MCF 10A (cell line): ENCODE measurements at regions of chr18 and their contacts with region 1.

Region 1: DNA sequence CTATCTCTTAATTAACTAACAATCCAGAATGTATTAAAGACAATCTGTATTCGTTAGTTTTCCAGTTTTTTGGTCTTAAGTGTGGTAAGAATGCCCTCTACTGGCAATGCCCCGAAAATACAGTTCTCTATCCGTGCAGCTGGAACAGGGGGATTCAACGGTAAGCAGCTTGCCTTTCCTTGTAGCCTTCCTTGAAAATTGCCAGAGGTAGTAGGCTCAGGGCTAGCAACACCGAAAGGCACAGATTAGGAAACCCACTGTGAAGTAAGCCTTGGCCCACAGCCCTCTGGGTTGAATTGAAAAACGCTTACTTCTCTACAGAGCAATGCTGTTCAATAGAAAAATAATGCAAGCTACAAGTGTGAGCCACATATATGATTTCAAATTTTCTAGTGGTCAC is 17.1 kb upstream of the VPS4B start:
- DNase-seq: peak; percentile 71
- H3K4me3 Mint-ChIP-seq: no peak overlapping the region
- H3K27ac Mint-ChIP-seq: no peak overlapping the region
- H3K4me1 Mint-ChIP-seq: peaks cover 34% of the 10 kb centered on the region
- H3K27me3 Mint-ChIP-seq: no peaks in the 10 kb centered on the region
- CTCF ChIP-seq: peak; percentile 74

Region 2: DNA sequence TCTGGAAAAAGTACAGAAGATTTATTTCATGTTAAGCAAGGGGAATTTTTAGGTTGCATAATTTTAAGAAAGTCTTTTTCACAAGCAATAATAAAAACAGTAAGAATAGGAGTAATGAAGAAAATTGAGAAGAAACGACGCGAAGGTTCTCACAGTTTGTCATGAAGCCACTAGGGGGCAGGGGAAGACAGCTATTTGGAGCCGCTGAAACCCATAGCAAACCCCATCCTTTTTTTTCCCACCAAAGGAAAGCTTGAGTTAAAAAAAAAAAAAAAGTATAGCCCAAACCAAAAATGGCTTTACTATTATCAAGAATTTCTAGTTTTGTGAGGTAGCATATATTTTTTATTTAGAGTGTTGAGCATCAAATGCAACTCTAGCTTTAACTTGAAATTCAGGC is 423.1 kb before region 1 on chr18:
- CTCF ChIA-PET with region 1: interaction called, 68 read pairs
- POLR2A ChIA-PET with region 1: interaction called, 8 read pairs
- intact Hi-C with region 1: loop called (anchors 1 kb)
- DNase-seq: peak; percentile 68
- H3K4me3 Mint-ChIP-seq: no peak overlapping the region
- H3K27ac Mint-ChIP-seq: no peak overlapping the region
- H3K4me1 Mint-ChIP-seq: no peaks in the 10 kb centered on the region
- H3K27me3 Mint-ChIP-seq: peaks cover 24% of the 10 kb centered on the region
- CTCF ChIP-seq: peak; percentile 76

Region 3: GRCh38 chr18:63111671-63112402 is 327.5 kb before region 1 on chr18:
- CTCF ChIA-PET with region 1: no interaction called
- POLR2A ChIA-PET with region 1: no interaction called
- intact Hi-C with region 1: no loop called
- DNase-seq: no peak
- H3K4me3 Mint-ChIP-seq: no peak overlapping the region
- H3K27ac Mint-ChIP-seq: no peak overlapping the region
- H3K4me1 Mint-ChIP-seq: peaks cover 5% of the 10 kb centered on the region
- H3K27me3 Mint-ChIP-seq: no peaks in the 10 kb centered on the region
- CTCF ChIP-seq: no peak

Region 4: GRCh38 chr18:63131106-63131958 is 308.0 kb before region 1 on chr18:
- CTCF ChIA-PET with region 1: interaction called, 25 read pairs
- POLR2A ChIA-PET with region 1: interaction called, 4 read pairs
- intact Hi-C with region 1: loop called (anchors 1 kb)
- DNase-seq: peak; percentile 65
- H3K4me3 Mint-ChIP-seq: no peak overlapping the region
- H3K27ac Mint-ChIP-seq: no peak overlapping the region
- H3K4me1 Mint-ChIP-seq: no peaks in the 10 kb centered on the region
- H3K27me3 Mint-ChIP-seq: peaks cover 7% of the 10 kb centered on the region
- CTCF ChIP-seq: peak; percentile 52

Region 5: DNA sequence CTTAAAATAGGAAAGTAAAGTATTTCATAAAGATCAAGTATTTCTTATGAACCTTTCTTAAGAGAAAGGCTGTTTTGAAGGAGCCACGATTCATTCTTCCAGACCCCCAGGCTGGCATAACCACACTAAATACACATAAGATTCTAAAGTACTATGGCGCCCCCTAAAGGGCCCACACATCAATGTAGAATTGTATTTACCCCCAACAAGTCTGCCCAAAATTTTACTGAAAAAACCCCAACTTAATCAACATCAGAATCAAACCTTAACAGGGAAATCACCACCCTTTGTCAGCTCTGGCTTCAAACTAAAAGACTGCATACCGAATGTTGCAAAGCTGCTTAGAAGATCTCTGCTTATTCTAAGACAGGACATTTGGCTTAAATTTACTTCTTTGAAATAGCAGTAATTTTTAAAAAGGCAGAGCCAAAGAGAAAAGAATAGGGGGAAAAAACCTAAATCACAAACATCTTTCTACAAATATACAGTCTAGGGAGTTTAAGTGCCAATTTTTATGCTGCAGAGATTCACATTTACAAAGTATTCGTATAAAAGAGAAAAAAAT is 99.3 kb before region 1 on chr18:
- CTCF ChIA-PET with region 1: interaction called, 7 read pairs
- POLR2A ChIA-PET with region 1: interaction called, 9 read pairs
- intact Hi-C with region 1: loop called (anchors 5 kb)
- DNase-seq: peak; percentile 37
- H3K4me3 Mint-ChIP-seq: no peak overlapping the region
- H3K27ac Mint-ChIP-seq: no peak overlapping the region
- H3K4me1 Mint-ChIP-seq: peaks cover 21% of the 10 kb centered on the region
- H3K27me3 Mint-ChIP-seq: no peaks in the 10 kb centered on the region
- CTCF ChIP-seq: peak; percentile 46

Region 6: DNA sequence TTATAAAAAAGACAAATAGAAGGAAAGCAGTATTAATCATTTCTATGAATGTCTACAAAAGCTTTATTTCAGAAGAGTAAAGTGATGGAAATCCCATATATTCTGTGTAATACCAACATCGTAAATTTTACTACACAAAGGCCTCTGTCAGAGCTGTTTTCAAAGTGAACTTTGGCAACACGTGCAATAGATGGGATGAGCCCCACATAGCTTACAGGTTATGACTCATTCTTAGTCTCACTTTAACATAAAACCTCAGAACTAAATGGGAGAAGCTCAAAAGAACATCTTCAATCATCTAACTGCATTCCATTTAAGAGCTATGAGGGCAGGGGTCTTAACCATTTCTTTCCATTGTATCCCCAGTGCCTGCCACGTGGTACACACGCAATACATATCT is 28.5 kb before region 1 on chr18:
- CTCF ChIA-PET with region 1: interaction called, 14 read pairs
- POLR2A ChIA-PET with region 1: interaction called, 11 read pairs
- intact Hi-C with region 1: no loop called
- DNase-seq: peak; percentile 74
- H3K4me3 Mint-ChIP-seq: no peak overlapping the region
- H3K27ac Mint-ChIP-seq: peak overlapping the region; percentile 57
- H3K4me1 Mint-ChIP-seq: peaks cover 25% of the 10 kb centered on the region
- H3K27me3 Mint-ChIP-seq: no peaks in the 10 kb centered on the region
- CTCF ChIP-seq: no peak

Region 7: DNA sequence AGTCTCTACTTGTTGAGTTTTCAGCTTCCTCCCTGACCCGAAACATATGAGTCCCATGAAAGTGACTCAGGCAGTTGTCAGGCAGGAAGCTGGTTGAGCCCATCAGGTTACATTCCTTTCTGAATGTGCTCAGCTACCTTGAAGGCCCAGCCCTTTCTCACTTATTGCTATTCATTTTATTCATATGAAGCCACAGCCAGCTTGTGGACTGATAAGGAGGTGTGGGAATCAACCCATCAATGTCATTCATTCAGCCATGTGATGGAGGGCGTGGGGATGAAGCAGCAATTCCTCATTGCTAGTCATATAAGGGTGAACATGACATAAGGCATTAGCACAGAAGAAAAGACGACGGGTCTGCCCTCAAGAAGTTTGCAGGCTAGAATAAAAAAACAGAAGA is 11.8 kb before region 1 on chr18:
- CTCF ChIA-PET with region 1: interaction called, 63 read pairs
- POLR2A ChIA-PET with region 1: interaction called, 264 read pairs
- intact Hi-C with region 1: loop called (anchors 2 kb)
- DNase-seq: peak; percentile 83
- H3K4me3 Mint-ChIP-seq: no peak overlapping the region
- H3K27ac Mint-ChIP-seq: peak overlapping the region; percentile 77
- H3K4me1 Mint-ChIP-seq: peaks cover 16% of the 10 kb centered on the region
- H3K27me3 Mint-ChIP-seq: no peaks in the 10 kb centered on the region
- CTCF ChIP-seq: no peak

Region 8: DNA sequence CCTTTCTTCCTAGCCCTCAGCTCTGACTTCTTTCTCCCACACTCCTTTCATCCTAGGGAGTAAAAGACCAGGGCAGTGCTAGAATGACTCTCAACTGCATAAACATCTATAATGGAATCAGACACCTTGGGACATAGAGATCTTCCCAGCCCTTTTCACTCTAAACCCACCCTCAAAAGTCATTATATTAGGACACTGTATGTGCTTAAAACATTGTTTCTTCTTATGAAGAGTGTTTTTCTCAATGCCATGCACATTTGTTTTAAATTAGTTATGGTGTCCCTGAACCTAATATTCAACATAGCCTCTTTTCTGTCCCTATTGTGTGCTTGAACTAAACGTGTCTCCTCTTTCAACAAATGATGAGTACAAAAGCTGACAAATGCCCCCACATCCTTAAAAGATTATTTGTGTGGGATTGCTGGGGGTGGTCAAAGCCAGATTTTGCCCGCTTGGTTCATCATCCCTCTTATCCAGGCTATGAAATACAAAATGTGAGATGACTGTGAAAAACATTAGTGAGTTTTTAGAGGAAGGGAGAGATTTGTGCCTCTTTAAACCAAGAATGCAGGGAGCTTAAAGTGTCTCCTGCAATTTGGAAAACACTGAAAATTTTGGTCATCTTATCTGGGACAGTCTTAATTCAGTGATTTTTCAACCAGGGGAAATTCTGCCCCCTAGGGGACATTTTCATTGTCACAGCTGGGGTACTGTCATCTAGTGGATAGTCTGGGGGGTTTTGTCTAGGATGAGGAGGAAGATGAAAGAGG is 66.4 kb after region 1 on chr18:
- CTCF ChIA-PET with region 1: interaction called, 16 read pairs
- POLR2A ChIA-PET with region 1: interaction called, 7 read pairs
- intact Hi-C with region 1: loop called (anchors 1 kb)
- DNase-seq: peak; percentile 72
- H3K4me3 Mint-ChIP-seq: no peak overlapping the region
- H3K27ac Mint-ChIP-seq: peak overlapping the region; percentile 77
- H3K4me1 Mint-ChIP-seq: peaks cover 6% of the 10 kb centered on the region
- H3K27me3 Mint-ChIP-seq: no peaks in the 10 kb centered on the region
- CTCF ChIP-seq: peak; percentile 67

Region 9: GRCh38 chr18:63523660-63524059 is 84.3 kb after region 1 on chr18:
- CTCF ChIA-PET with region 1: no interaction called
- POLR2A ChIA-PET with region 1: no interaction called
- intact Hi-C with region 1: no loop called
- DNase-seq: no peak
- H3K4me3 Mint-ChIP-seq: no peak overlapping the region
- H3K27ac Mint-ChIP-seq: no peak overlapping the region
- H3K4me1 Mint-ChIP-seq: peaks cover 6% of the 10 kb centered on the region
- H3K27me3 Mint-ChIP-seq: no peaks in the 10 kb centered on the region
- CTCF ChIP-seq: no peak